ENCODE measurements at regions of chr10 and their contacts with region 1.

Region 1: GRCh38 chr10:5518138-5518537 is 6.6 kb upstream of the CALML3 start:
- DNase-seq: peak; percentile 93 to 95
- H3K4me3 ChIP-seq: no peak overlapping the region
- H3K4me3 Mint-ChIP-seq: peak overlapping the region; percentile 44
- H3K27ac Mint-ChIP-seq: peak overlapping the region; percentile 70
- H3K4me1 ChIP-seq: peaks cover 56% of the 10 kb centered on the region
- H3K4me1 Mint-ChIP-seq: peaks cover 47% of the 10 kb centered on the region
- H3K27me3 ChIP-seq: no peaks in the 10 kb centered on the region
- H3K27me3 Mint-ChIP-seq: no peaks in the 10 kb centered on the region
- CTCF ChIP-seq: no peak

Region 2: DNA sequence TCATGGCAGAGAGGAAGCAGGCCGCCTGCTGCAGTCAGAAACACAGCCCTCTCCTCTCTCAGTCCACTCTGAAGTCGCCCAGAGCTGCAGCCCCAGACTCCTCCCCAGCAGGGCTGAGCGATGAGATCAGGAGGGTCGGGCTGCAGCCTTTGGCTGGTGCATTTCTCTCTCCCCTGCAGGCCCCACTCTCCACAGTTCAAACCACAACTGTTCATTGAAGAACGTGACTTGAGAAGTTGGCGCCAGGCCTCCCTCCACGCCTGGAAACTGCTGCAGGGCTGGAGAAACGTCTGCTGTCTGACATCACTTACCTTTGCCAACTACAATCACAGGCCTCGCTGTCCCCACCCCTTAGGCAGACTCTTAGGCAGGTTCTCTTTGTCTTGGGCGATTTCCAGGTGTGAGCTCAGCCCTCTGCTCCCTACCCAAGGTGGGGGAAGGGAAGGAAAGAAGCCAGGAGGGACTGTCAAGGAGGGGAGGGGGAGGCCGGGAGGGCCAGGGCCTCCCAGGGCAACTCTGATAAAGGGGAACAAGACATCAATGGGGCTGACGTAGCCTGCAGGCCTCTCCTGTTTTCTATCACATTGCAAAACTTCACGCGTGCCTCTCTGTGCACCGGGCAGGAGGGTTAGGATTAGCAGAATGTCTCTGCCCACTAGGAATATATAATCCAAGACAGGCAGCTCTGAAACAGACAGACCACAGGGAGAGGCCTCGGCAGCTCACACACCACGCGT is 51.6 kb before region 1 on chr10:
- CTCF ChIA-PET with region 1: no interaction called
- POLR2A ChIA-PET with region 1: no interaction called
- intact Hi-C with region 1: no loop called
- DNase-seq: peak in 1 of 2 experiments; percentile 45
- H3K4me3 ChIP-seq: no peak overlapping the region
- H3K4me3 Mint-ChIP-seq: no peak overlapping the region
- H3K27ac Mint-ChIP-seq: peak overlapping the region; percentile 40
- H3K4me1 ChIP-seq: peaks cover 39% of the 10 kb centered on the region
- H3K4me1 Mint-ChIP-seq: peaks cover 21% of the 10 kb centered on the region
- H3K27me3 ChIP-seq: no peaks in the 10 kb centered on the region
- H3K27me3 Mint-ChIP-seq: no peaks in the 10 kb centered on the region
- CTCF ChIP-seq: no peak

Region 3: GRCh38 chr10:5479481-5480161 is 38.5 kb before region 1 on chr10:
- CTCF ChIA-PET with region 1: no interaction called
- POLR2A ChIA-PET with region 1: no interaction called
- intact Hi-C with region 1: no loop called
- DNase-seq: no peak
- H3K4me3 ChIP-seq: no peak overlapping the region
- H3K4me3 Mint-ChIP-seq: no peak overlapping the region
- H3K27ac Mint-ChIP-seq: no peak overlapping the region
- H3K4me1 ChIP-seq: 0 out of 2 replicates have a peak, but pooled peaks cover 5% of the 10 kb centered on the region
- H3K4me1 Mint-ChIP-seq: no peaks in the 10 kb centered on the region
- H3K27me3 ChIP-seq: no peaks in the 10 kb centered on the region
- H3K27me3 Mint-ChIP-seq: no peaks in the 10 kb centered on the region
- CTCF ChIP-seq: no peak

Region 4: GRCh38 chr10:5493688-5494087 is 24.4 kb before region 1 on chr10:
- CTCF ChIA-PET with region 1: no interaction called
- POLR2A ChIA-PET with region 1: interaction called, 5 read pairs
- intact Hi-C with region 1: loop called (anchors 1 kb)
- DNase-seq: peak; percentile 89 to 92
- H3K4me3 ChIP-seq: peak overlapping the region; percentile 19
- H3K4me3 Mint-ChIP-seq: peak overlapping the region; percentile 55
- H3K27ac Mint-ChIP-seq: peak overlapping the region; percentile 83
- H3K4me1 ChIP-seq: peaks cover 53% of the 10 kb centered on the region
- H3K4me1 Mint-ChIP-seq: peaks cover 8% of the 10 kb centered on the region
- H3K27me3 ChIP-seq: no peaks in the 10 kb centered on the region
- H3K27me3 Mint-ChIP-seq: no peaks in the 10 kb centered on the region
- CTCF ChIP-seq: no peak

Region 5: DNA sequence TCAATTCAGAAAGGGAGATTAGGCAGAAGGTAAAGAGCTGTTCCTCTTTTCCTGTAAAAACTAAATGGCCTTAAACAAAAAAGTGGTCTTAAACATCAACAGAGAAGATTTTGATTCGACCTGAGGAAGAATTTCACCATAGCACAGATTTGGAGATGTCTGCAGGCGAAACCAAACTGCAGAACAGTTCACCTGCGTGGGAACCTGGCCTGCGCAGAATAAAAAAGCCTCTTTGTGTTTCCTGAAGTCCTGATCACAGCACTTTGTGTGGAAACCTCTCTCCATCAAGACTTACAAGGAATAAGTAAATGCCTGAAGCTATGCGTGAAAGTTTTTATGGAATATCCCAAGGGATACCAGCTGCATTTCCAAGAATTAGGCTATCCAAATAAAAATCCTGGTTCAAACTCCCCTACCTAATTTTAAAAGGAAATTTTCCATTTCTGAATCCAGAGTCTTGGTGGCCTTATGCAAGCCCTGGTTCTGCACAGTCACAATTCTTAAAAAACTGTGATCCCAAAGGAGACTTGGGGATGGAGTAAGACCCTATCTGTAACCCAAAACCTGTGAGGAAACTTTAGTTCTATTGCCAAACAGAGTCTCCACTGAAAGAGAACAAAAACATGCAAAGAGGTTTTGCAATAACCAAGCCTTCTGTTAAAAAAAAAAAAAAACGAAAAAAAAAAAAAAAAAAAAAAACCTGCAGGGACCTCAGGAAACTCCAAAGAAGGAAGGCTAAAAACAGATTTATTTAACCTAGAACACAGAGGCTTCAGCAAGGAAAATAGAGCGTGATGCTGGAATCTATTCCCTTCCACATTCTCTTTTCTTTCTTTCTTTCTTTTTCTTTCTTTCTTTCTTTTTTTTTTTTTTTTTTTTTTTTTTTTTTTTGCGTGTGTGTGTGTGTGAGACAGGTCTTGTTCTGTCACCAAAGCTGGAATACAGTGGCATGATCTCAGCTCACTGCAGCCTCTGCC is 17.0 kb after region 1 on chr10:
- CTCF ChIA-PET with region 1: no interaction called
- POLR2A ChIA-PET with region 1: interaction called, 3 read pairs
- intact Hi-C with region 1: loop called (anchors 1 kb)
- DNase-seq: peak in 1 of 2 experiments; percentile 11
- H3K4me3 ChIP-seq: no peak overlapping the region
- H3K4me3 Mint-ChIP-seq: no peak overlapping the region
- H3K27ac Mint-ChIP-seq: no peak overlapping the region
- H3K4me1 ChIP-seq: peaks cover 23% of the 10 kb centered on the region
- H3K4me1 Mint-ChIP-seq: peaks cover 21% of the 10 kb centered on the region
- H3K27me3 ChIP-seq: no peaks in the 10 kb centered on the region
- H3K27me3 Mint-ChIP-seq: no peaks in the 10 kb centered on the region
- CTCF ChIP-seq: no peak

Region 6: GRCh38 chr10:5555021-5555510 is 36.9 kb after region 1 on chr10:
- CTCF ChIA-PET with region 1: no interaction called
- POLR2A ChIA-PET with region 1: no interaction called
- intact Hi-C with region 1: no loop called
- DNase-seq: peak in 1 of 2 experiments; percentile 34
- H3K4me3 ChIP-seq: no peak overlapping the region
- H3K4me3 Mint-ChIP-seq: no peak overlapping the region
- H3K27ac Mint-ChIP-seq: no peak overlapping the region
- H3K4me1 ChIP-seq: peaks cover 46% of the 10 kb centered on the region
- H3K4me1 Mint-ChIP-seq: peaks cover 31% of the 10 kb centered on the region
- H3K27me3 ChIP-seq: no peaks in the 10 kb centered on the region
- H3K27me3 Mint-ChIP-seq: no peaks in the 10 kb centered on the region
- CTCF ChIP-seq: no peak

Region 7: GRCh38 chr10:5565671-5566577 is 47.8 kb after region 1 on chr10:
- CTCF ChIA-PET with region 1: no interaction called
- POLR2A ChIA-PET with region 1: no interaction called
- intact Hi-C with region 1: loop called (anchors 1 kb)
- DNase-seq: peak in 1 of 2 experiments; percentile 30
- H3K4me3 ChIP-seq: no peak overlapping the region
- H3K4me3 Mint-ChIP-seq: no peak overlapping the region
- H3K27ac Mint-ChIP-seq: peak overlapping the region; percentile 3
- H3K4me1 ChIP-seq: peaks cover 37% of the 10 kb centered on the region
- H3K4me1 Mint-ChIP-seq: peaks cover 43% of the 10 kb centered on the region
- H3K27me3 ChIP-seq: no peaks in the 10 kb centered on the region
- H3K27me3 Mint-ChIP-seq: no peaks in the 10 kb centered on the region
- CTCF ChIP-seq: no peak

Region 8: GRCh38 chr10:5609952-5610616 is 91.9 kb after region 1 on chr10:
- CTCF ChIA-PET with region 1: no interaction called
- POLR2A ChIA-PET with region 1: no interaction called
- intact Hi-C with region 1: no loop called
- DNase-seq: peak; percentile 46 to 68
- H3K4me3 ChIP-seq: no peak overlapping the region
- H3K4me3 Mint-ChIP-seq: peak overlapping the region; percentile 52
- H3K27ac Mint-ChIP-seq: peak overlapping the region; percentile 89
- H3K4me1 ChIP-seq: peaks cover 34% of the 10 kb centered on the region
- H3K4me1 Mint-ChIP-seq: peaks cover 26% of the 10 kb centered on the region
- H3K27me3 ChIP-seq: no peaks in the 10 kb centered on the region
- H3K27me3 Mint-ChIP-seq: no peaks in the 10 kb centered on the region
- CTCF ChIP-seq: no peak

Region 9: DNA sequence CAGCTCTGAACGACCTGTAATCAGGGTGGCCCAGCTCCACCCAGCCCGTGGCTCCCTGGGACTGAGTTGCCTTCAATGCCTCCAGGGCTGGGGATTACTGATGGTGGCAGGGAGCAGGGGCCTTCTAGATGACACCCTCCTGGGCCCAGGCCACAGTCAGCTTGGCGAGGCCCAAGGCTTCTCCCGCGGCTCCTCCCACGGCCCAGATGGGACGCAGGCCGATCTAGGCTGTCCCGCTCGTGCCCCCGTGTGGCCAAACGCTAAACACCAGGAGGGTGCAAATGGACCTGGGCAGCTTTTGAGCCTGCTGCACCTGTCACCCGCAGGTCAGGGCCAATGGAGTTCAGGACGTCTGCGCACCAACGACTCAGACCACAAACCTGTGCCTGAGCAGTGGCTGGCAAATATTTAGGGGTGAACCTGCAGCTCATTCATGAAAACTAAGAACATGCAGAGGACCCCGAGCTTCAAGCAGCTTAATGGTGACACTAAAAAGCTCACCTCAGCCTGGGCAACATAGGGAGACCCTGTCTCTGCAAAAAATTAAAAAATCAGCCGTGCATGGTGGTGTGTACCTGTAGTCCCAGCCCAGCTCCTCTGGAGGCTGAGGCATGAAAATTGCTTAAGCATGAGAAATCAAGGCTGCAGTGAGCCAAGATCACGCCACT is 105.1 kb after region 1 on chr10:
- CTCF ChIA-PET with region 1: interaction called, 4 read pairs
- POLR2A ChIA-PET with region 1: no interaction called
- intact Hi-C with region 1: loop called (anchors 1 kb)
- DNase-seq: peak; percentile 94 to 97
- H3K4me3 ChIP-seq: no peak overlapping the region
- H3K4me3 Mint-ChIP-seq: no peak overlapping the region
- H3K27ac Mint-ChIP-seq: peak overlapping the region; percentile 46
- H3K4me1 ChIP-seq: peaks cover 23% of the 10 kb centered on the region
- H3K4me1 Mint-ChIP-seq: peaks cover 20% of the 10 kb centered on the region
- H3K27me3 ChIP-seq: no peaks in the 10 kb centered on the region
- H3K27me3 Mint-ChIP-seq: no peaks in the 10 kb centered on the region
- CTCF ChIP-seq: peak; percentile 97